ENCODE measurements at regions of chr1 and their contacts with region 1.

Region 1: GRCh38 chr1:24744911-24745710 is at the start of gene CLIC4:
- DNase-seq: peak; percentile 100
- ATAC-seq: peak; percentile 84
- H3K4me3 Mint-ChIP-seq: peak within 1 kb of the TSS; percentile 95
- H3K27ac Mint-ChIP-seq: peak within 1 kb of the TSS; percentile 99
- H3K4me1 Mint-ChIP-seq: peaks cover 63% of the 10 kb centered on the region
- H3K27me3 Mint-ChIP-seq: no peaks in the 10 kb centered on the region
- CTCF ChIP-seq: no peak
- total RNA-seq, gene CLIC4: 248 to 262 TPM (median 260 TPM) in 3 replicates

Region 2: GRCh38 chr1:24609949-24610382 is 135.1 kb before region 1 on chr1:
- CTCF ChIA-PET with region 1: no interaction called
- POLR2A ChIA-PET with region 1: no interaction called
- DNase-seq: no peak
- ATAC-seq: no peak
- H3K4me3 Mint-ChIP-seq: no peak overlapping the region
- H3K27ac Mint-ChIP-seq: no peak overlapping the region
- H3K4me1 Mint-ChIP-seq: no peaks in the 10 kb centered on the region
- H3K27me3 Mint-ChIP-seq: no peaks in the 10 kb centered on the region; the same call in 1 of the 2 replicates
- CTCF ChIP-seq: no peak

Region 3: GRCh38 chr1:24705260-24706073 is 39.6 kb before region 1 on chr1:
- CTCF ChIA-PET with region 1: interaction called, 10 read pairs
- POLR2A ChIA-PET with region 1: interaction called, 9 read pairs
- DNase-seq: peak; percentile 85
- ATAC-seq: peak; percentile 99
- H3K4me3 Mint-ChIP-seq: no peak overlapping the region
- H3K27ac Mint-ChIP-seq: peak overlapping the region; percentile 62
- H3K4me1 Mint-ChIP-seq: peaks cover 27% of the 10 kb centered on the region
- H3K27me3 Mint-ChIP-seq: peaks cover 2% of the 10 kb centered on the region; the same call in 1 of the 2 replicates
- CTCF ChIP-seq: no peak

Region 4: GRCh38 chr1:24727501-24728216 is 17.5 kb before region 1 on chr1:
- CTCF ChIA-PET with region 1: interaction called, 24 read pairs
- POLR2A ChIA-PET with region 1: interaction called, 24 read pairs
- DNase-seq: no peak
- ATAC-seq: no peak
- H3K4me3 Mint-ChIP-seq: no peak overlapping the region
- H3K27ac Mint-ChIP-seq: no peak overlapping the region
- H3K4me1 Mint-ChIP-seq: peaks cover 52% of the 10 kb centered on the region
- H3K27me3 Mint-ChIP-seq: no peaks in the 10 kb centered on the region
- CTCF ChIP-seq: no peak

Region 5: GRCh38 chr1:24783713-24784112 is 38.6 kb after region 1 on chr1:
- CTCF ChIA-PET with region 1: interaction called, 10 read pairs
- POLR2A ChIA-PET with region 1: no interaction called
- DNase-seq: no peak
- ATAC-seq: no peak
- H3K4me3 Mint-ChIP-seq: no peak overlapping the region
- H3K27ac Mint-ChIP-seq: peak overlapping the region; percentile 87
- H3K4me1 Mint-ChIP-seq: peaks cover 22% of the 10 kb centered on the region
- H3K27me3 Mint-ChIP-seq: no peaks in the 10 kb centered on the region
- CTCF ChIP-seq: no peak

Region 6: GRCh38 chr1:24830680-24831272 is 85.7 kb after region 1 on chr1:
- CTCF ChIA-PET with region 1: interaction called, 20 read pairs
- POLR2A ChIA-PET with region 1: interaction called, 10 read pairs
- DNase-seq: no peak
- ATAC-seq: peak; percentile 57; the same call in 1 of the 2 replicates
- H3K4me3 Mint-ChIP-seq: no peak overlapping the region
- H3K27ac Mint-ChIP-seq: no peak overlapping the region
- H3K4me1 Mint-ChIP-seq: peaks cover 35% of the 10 kb centered on the region
- H3K27me3 Mint-ChIP-seq: no peaks in the 10 kb centered on the region
- CTCF ChIP-seq: peak; percentile 52; the same call in 1 of the 2 replicates

Measured in WTC11 (cell line).